ENCODE measurements at regions of chrX and their contacts with region 1.

Region 1: DNA sequence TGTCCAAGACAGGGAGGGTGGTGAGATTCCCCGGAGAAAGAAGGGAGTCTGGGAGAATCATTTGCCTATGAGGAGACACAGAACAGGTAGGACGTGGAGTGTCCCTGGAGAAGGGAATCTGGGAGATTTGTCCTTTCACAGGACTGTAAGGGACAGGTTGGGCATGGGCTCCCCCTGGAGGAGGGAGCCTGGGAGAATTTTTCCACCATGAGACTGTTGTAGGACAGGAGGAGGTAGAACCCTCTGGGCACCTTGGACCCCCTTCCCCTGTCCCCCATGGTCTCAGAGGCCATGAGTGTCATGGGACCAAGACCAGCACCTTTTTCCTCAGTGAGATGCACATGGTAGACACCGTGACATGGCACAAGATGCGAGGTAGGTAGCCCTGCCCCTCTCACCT is 2.8 kb downstream of the PORCN start:
- DNase-seq: no peak

Region 2: DNA sequence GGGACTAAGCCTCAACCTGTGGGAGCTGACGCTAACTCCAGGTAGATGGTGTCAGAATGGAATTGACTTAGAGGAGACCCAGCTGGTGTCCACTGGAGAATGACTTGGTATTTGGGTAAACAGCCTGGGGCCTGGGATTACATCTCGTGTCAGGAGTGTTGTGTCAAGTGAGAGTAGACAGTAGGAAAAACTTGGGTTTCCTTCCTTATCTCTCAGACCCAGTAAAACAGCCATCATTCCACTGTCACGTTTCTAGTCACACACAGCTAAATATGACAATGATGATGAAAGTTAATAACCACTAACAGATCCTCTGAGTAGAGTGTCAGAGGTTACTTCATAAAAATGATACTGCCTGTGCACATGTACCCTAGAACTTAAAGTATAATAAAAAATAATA is 1980.1 kb before region 1 on chrX:
- intact Hi-C with region 1: loop called in 1 of 2 experiments (anchors 5 kb)
- DNase-seq: no peak

Region 3: DNA sequence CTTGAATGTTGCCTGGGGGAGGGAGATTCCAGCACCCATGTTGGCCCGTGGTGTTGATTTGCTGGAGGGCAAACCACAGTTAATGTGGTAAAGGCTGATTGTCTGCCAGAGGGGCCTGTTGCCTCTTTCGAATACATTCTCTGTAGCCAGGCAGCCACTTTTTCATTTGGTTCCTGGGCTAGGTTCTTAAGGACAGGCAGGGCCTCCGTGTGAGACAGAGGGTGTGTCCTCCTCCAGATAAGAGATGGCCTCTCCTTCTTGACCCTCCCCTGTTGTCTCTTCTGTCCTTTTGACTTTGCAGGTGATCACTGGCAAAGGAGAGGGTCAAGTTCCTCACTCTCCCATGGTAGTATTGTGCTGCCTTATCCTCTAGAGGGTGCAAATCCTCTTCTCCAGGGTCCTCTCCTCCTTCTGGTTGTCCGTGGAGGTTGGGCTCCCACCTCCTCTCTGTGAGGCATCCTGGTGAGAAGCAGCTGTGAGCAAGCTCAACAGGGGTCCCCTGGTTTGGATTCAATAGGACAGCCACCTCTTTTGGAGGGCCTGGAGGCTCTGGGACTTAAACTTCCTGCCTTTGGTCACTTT is 552.7 kb before region 1 on chrX:
- intact Hi-C with region 1: loop called in 1 of 2 experiments (anchors 5 kb)
- DNase-seq: no peak